MCF 10A (cell line): ENCODE measurements at regions of chr1 and their contacts with region 1.

Region 1: GRCh38 chr1:229625915-229626831 is at the starts of genes TAF5L and URB2:
- DNase-seq: peak; percentile 96
- H3K4me3 Mint-ChIP-seq: peak within 1 kb of the TSS; percentile 99
- H3K27ac Mint-ChIP-seq: peak within 1 kb of the TSS; percentile 94
- H3K4me1 Mint-ChIP-seq: peaks cover 57% of the 10 kb centered on the region
- H3K27me3 Mint-ChIP-seq: no peaks in the 10 kb centered on the region
- CTCF ChIP-seq: peak; percentile 7
- total RNA-seq, gene TAF5L: 31.8 and 37.6 TPM in 2 replicates
- total RNA-seq, gene URB2: 25.8 and 35.5 TPM in 2 replicates

Region 2: DNA sequence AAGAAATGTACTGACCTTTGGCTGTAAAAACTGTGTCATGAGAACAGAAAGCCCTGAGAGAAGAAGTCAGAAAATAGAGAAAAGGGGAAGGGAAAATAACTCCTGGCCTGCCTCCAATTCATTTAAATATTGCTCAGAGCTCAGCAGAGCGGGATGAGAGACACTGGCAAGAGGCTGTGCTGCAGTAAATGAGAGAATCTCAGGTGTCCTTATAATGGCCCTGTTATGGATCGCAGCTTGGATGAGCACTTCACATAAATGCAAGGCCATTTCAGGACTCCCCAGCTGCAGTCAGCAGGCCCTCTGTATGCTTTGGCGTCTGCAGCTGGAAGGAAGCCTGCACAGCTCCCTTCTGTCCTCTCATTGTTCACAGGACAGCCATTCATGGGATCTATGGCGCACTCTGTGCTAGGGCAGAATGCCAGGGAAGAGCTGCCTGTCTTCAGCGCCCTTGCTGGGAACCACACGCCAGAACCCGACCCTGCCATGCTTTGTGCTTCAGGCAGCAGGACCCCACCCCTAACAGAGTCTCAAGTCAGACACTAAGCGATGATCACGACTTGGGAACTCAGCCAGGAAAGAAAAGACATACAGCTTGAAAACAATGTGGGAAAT is 47.0 kb before region 1 on chr1:
- CTCF ChIA-PET with region 1: interaction called, 4 read pairs
- POLR2A ChIA-PET with region 1: interaction called, 61 read pairs
- intact Hi-C with region 1: no loop called
- DNase-seq: peak; percentile 38
- H3K4me3 Mint-ChIP-seq: no peak overlapping the region
- H3K27ac Mint-ChIP-seq: no peak overlapping the region
- H3K4me1 Mint-ChIP-seq: peaks cover 11% of the 10 kb centered on the region
- H3K27me3 Mint-ChIP-seq: no peaks in the 10 kb centered on the region
- CTCF ChIP-seq: no peak

Region 3: DNA sequence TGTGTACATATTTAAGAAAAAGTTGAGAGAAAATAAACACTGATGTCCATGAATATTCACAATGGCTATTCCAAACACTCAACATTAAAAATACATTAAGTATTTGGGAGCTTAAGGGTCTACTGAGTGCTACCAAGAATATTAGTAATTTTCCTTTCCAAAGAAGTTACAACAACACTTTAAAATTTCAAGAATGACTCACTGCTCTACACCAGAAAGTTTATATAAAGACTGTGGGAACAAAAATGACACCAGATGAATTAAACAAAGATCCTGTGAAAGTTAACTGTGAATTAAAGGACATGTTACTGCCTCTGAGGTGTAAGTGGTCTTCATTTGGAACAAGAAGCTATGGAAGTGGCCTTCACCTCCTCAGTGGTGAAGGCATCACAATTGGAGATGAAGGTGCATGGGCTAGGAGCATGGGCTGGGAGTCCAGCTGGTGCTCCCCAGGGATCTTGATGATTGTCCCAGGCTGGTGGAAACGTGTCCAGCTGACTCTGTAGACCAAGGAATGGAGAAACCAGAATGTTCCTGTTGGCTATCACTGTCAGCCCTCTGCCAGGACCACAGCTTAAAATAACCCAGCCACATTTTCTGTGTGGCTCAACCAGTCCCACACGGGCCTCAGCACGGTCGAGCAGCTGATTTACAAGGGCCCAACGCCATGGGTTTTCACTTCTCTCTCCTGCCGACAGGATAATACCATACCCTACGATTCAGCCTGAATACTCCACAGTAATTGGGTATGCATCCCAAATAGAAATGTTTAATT is 29.1 kb before region 1 on chr1:
- CTCF ChIA-PET with region 1: interaction called, 3 read pairs
- POLR2A ChIA-PET with region 1: interaction called, 22 read pairs
- intact Hi-C with region 1: no loop called
- DNase-seq: peak; percentile 34
- H3K4me3 Mint-ChIP-seq: no peak overlapping the region
- H3K27ac Mint-ChIP-seq: peak overlapping the region; percentile 57
- H3K4me1 Mint-ChIP-seq: peaks cover 30% of the 10 kb centered on the region
- H3K27me3 Mint-ChIP-seq: no peaks in the 10 kb centered on the region
- CTCF ChIP-seq: no peak

Region 4: GRCh38 chr1:229614701-229615100 is 11.5 kb before region 1 on chr1:
- CTCF ChIA-PET with region 1: interaction called, 6 read pairs
- POLR2A ChIA-PET with region 1: interaction called, 12 read pairs
- intact Hi-C with region 1: no loop called
- DNase-seq: no peak
- H3K4me3 Mint-ChIP-seq: no peak overlapping the region
- H3K27ac Mint-ChIP-seq: no peak overlapping the region
- H3K4me1 Mint-ChIP-seq: peaks cover 4% of the 10 kb centered on the region
- H3K27me3 Mint-ChIP-seq: no peaks in the 10 kb centered on the region
- CTCF ChIP-seq: no peak